Gastrocnemius medialis (tissue), 4 donors: ENCODE measurements at regions of chr13 and their contacts with region 1.

Region 1: GRCh38 chr13:113153810-113154748 is 4.4 kb upstream of the PROZ start:
- DNase-seq: peak; percentile 75 to 78
- ATAC-seq: peak; percentile 67 to 69
- H3K4me3 ChIP-seq: peak overlapping the region; percentile 57 to 71 (median 64)
- H3K27ac ChIP-seq: peak overlapping the region; percentile 85 to 96 (median 93)
- H3K4me1 ChIP-seq: peaks cover 9 to 16% of the 10 kb centered on the region in 2 donors
- H3K27me3 ChIP-seq: no peaks in the 10 kb centered on the region
- CTCF ChIP-seq: no peak
- POLR2A ChIP-seq: peak; percentile 72 to 73

Region 2: DNA sequence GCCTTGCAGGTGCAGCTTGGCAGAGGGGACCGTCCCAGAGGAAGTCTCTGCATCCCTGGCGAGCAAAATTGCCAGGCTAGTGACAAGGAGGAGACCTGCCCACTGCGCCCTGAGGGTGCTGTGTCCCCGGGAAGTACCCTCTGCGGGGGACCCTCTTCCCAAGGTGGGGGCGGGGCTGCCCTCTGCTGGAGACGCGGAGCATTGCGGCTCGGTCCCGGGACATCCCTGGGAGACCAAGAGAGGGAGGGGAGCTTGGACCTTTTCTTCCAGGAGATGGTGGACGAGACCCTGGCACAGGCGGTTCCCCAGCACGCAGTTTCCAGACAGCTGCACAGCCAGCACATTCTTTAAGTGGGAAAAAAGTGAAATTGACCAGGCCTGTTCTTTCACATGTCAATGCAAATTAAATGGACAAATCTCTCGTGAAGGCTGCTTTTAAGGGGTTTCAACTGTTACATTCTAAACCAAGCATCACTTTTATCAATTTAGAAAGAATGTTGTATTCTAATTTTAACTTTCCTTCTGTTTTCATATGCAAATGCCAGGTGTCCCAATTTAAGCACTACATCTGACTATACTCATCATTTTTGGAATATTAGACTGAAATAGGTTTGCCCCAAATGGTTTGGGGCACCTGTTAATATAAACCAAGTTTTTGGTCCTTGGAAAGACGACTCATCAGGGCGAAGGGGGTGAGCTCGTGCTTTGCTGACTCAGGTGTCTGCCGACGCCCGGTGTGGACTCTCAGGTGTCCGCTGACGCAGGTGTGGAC is 124.4 kb before region 1 on chr13:
- in situ Hi-C with region 1: no loop called
- intact Hi-C with region 1: loop called (anchors 10 kb)
- DNase-seq: no peak
- ATAC-seq: no peak
- H3K4me3 ChIP-seq: no peak overlapping the region
- H3K27ac ChIP-seq: no peak overlapping the region
- H3K4me1 ChIP-seq: no peaks in the 10 kb centered on the region
- H3K27me3 ChIP-seq: peaks cover 0 to 7% (median 0%) of the 10 kb centered on the region in 3 donors
- CTCF ChIP-seq: peak; percentile 10 to 61 (median 53)
- POLR2A ChIP-seq: no peak

Region 3: DNA sequence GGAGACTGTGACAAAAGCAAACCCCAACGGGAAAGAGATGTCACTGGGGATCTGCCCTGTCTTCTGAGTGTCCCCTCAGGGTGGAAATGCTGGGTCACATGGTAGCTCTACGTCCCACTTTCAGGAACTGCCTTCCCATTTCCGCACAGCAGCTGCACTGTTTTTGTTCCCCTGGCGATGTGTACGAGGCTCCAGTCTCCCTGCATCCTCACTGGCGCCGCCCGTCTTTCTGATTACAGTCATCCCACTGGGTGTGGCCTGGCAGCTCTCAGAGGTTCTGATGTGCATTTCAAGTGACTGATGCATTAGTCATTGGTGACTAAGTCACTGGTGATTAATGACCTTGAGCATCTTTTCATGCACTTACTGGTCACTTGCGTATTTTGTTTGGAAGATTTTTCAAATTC is 33.2 kb after region 1 on chr13:
- in situ Hi-C with region 1: no loop called
- intact Hi-C with region 1: loop called (anchors 1 kb)
- DNase-seq: peak; percentile 74 to 93
- ATAC-seq: peak; percentile 95 to 99
- H3K4me3 ChIP-seq: no peak overlapping the region
- H3K27ac ChIP-seq: peak overlapping the region; percentile 48 to 78 (median 56)
- H3K4me1 ChIP-seq: peaks cover 0 to 3% of the 10 kb centered on the region in 2 donors
- H3K27me3 ChIP-seq: no peaks in the 10 kb centered on the region
- CTCF ChIP-seq: no peak
- POLR2A ChIP-seq: no peak

Region 4: GRCh38 chr13:113208424-113209335 is 54.6 kb after region 1 on chr13 and contains the start of gene PCID2:
- in situ Hi-C with region 1: no loop called
- intact Hi-C with region 1: loop called (anchors 2 kb)
- DNase-seq: peak; percentile 80 to 86
- ATAC-seq: peak; percentile 79 to 81
- H3K4me3 ChIP-seq: peak within 1 kb of the TSS; percentile 77 to 99 (median 90)
- H3K27ac ChIP-seq: peak within 1 kb of the TSS; percentile 94 to 100 (median 100)
- H3K4me1 ChIP-seq: peaks cover 74 to 75% of the 10 kb centered on the region in 2 donors
- H3K27me3 ChIP-seq: no peaks in the 10 kb centered on the region
- CTCF ChIP-seq: no peak
- POLR2A ChIP-seq: peak; percentile 77 to 83
- total RNA-seq, gene PCID2: 26.4 to 45.6 (median 28.0) TPM

Region 5: DNA sequence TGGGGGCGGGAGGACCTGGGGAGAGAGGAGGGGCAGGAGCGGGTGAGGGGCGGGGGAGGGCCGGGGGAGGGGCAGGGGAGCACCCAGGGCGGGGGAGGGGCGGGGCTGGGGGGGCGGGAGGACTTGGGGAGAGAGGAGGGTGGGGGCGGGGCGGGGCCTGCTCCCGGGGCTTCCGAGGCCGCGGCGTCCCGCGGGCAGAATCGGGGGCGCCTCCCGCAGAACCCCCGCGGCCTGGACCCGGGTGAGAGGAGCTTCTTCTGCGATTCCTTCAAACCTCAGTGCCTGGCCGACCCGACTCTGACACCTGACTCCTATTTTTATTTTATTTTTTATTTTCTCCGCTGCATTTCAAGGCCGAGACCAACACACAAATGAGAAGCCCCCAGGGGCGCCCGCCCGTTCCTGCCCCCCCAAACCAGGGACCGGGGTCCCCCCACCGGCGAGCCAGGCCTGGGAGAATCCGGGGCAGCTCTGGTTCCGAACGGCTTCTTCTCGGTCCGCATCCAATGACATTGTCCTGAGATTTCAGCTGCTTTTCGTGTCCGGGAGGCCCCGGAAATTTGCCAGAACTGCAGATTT is 210.3 kb after region 1 on chr13:
- in situ Hi-C with region 1: no loop called
- intact Hi-C with region 1: loop called (anchors 2 kb)
- DNase-seq: no peak
- ATAC-seq: peak; percentile 18 to 23
- H3K4me3 ChIP-seq: peak overlapping the region; percentile 63 to 78 (median 72)
- H3K27ac ChIP-seq: peak overlapping the region; percentile 81 to 94 (median 90)
- H3K4me1 ChIP-seq: peaks cover 0 to 16% of the 10 kb centered on the region in 2 donors
- H3K27me3 ChIP-seq: no peaks in the 10 kb centered on the region
- CTCF ChIP-seq: no peak
- POLR2A ChIP-seq: peak; percentile 13 to 20

Region 6: GRCh38 chr13:113490496-113491417 is 336.7 kb after region 1 on chr13 and contains the start of gene DCUN1D2:
- in situ Hi-C with region 1: no loop called
- intact Hi-C with region 1: loop called (anchors 1 kb)
- DNase-seq: peak; percentile 87 to 94
- ATAC-seq: peak; percentile 76 to 81
- H3K4me3 ChIP-seq: peak within 1 kb of the TSS; percentile 80 to 91 (median 88)
- H3K27ac ChIP-seq: peak within 1 kb of the TSS; percentile 89 to 94 (median 92)
- H3K4me1 ChIP-seq: peaks cover 58 to 70% of the 10 kb centered on the region in 2 donors
- H3K27me3 ChIP-seq: no peaks in the 10 kb centered on the region
- CTCF ChIP-seq: peak in 1 of 5 experiments; percentile 28
- POLR2A ChIP-seq: peak; percentile 94
- total RNA-seq, gene DCUN1D2: 45.1 to 63.6 (median 56.0) TPM